Motor neuron (in vitro differentiated cells): ENCODE measurements at regions of chr6 and their contacts with region 1.

Region 1: GRCh38 chr6:43386492-43386891 is 17.0 kb upstream of the ZNF318 start:
- ATAC-seq: peak in 2 of 8 experiments; percentile 20 to 52
- H3K4me3 ChIP-seq: no peak overlapping the region
- H3K27ac ChIP-seq: no peak overlapping the region
- H3K4me1 ChIP-seq: peaks cover 6 to 8% of the 10 kb centered on the region in 2 donors

Region 2: GRCh38 chr6:42674780-42675179 is 711.7 kb before region 1 on chr6:
- in situ Hi-C with region 1: no loop called
- ATAC-seq: no peak
- H3K4me3 ChIP-seq: no peak overlapping the region
- H3K27ac ChIP-seq: no peak overlapping the region
- H3K4me1 ChIP-seq: no peaks in the 10 kb centered on the region

Region 3: GRCh38 chr6:43250992-43251373 is 135.5 kb before region 1 on chr6:
- in situ Hi-C with region 1: no loop called
- ATAC-seq: peak in 3 of 8 experiments; percentile 9 to 33 (median 28)
- H3K4me3 ChIP-seq: no peak overlapping the region
- H3K27ac ChIP-seq: no peak overlapping the region
- H3K4me1 ChIP-seq: peaks cover 19 to 25% of the 10 kb centered on the region in 2 donors

Region 4: DNA sequence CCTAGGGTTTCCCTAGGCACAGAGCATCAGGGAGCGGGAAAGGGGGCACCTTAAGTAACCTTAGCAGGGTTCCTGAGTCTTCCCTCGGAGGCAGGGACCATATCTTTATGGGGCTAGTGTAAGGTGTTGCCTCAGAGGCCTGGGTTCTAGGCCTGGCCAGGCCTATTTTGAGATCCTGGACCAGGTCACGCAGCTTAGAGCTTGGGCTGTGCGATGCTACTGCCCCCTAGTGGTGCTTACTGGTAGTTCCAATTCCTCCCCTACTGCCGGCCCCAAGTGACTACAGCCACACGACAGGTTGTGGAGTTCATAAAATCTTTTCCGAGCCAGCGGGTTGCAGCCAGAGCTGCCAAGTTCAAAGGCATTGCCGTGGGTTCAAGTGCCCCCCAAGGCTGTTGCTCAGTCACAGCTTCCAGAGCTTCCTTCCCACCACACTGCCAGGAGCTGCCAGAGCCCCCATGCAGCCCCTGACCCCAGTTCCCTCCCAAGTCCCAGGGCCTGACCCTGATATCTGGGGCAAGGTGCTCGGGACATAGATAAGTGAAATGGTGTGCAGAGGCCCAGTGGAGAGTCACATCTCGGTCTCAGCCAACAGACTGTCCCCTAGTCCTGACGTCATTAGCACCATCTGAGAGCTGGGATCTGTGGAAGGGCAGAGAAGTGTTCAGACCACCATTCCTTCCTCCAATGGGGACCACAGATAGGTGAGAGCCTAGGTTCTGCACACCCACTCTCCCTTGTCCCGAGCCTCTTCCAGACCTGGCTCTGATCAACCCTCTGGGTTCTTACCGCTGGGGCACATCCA is 120.4 kb after region 1 on chr6:
- in situ Hi-C with region 1: loop called in 2 of 9 experiments (anchors 10 to 25 kb)
- ATAC-seq: peak; percentile 27 to 49 (median 35)
- H3K4me3 ChIP-seq: peak overlapping the region in 1 of 5 donors; percentile 5
- H3K27ac ChIP-seq: no peak overlapping the region
- H3K4me1 ChIP-seq: peaks cover 15 to 17% of the 10 kb centered on the region in 2 donors

Region 5: GRCh38 chr6:43516697-43517504 is 130.4 kb after region 1 on chr6 and contains the starts of genes POLR1C and YIPF3:
- in situ Hi-C with region 1: loop called in 1 of 9 experiments (anchors 25 kb)
- ATAC-seq: peak; percentile 90 to 94 (median 92)
- H3K4me3 ChIP-seq: peak within 1 kb of the TSS; percentile 75 to 92 (median 77)
- H3K27ac ChIP-seq: peak within 1 kb of the TSS; percentile 91 to 93
- H3K4me1 ChIP-seq: peaks cover 21 to 28% of the 10 kb centered on the region in 2 donors
- total RNA-seq, gene POLR1C: 27.7 to 56.9 (median 41.8) TPM
- total RNA-seq, gene YIPF3: 59.3 to 142 (median 101) TPM